ENCODE measurements at regions of chr22 and their contacts with region 1.

Region 1: DNA sequence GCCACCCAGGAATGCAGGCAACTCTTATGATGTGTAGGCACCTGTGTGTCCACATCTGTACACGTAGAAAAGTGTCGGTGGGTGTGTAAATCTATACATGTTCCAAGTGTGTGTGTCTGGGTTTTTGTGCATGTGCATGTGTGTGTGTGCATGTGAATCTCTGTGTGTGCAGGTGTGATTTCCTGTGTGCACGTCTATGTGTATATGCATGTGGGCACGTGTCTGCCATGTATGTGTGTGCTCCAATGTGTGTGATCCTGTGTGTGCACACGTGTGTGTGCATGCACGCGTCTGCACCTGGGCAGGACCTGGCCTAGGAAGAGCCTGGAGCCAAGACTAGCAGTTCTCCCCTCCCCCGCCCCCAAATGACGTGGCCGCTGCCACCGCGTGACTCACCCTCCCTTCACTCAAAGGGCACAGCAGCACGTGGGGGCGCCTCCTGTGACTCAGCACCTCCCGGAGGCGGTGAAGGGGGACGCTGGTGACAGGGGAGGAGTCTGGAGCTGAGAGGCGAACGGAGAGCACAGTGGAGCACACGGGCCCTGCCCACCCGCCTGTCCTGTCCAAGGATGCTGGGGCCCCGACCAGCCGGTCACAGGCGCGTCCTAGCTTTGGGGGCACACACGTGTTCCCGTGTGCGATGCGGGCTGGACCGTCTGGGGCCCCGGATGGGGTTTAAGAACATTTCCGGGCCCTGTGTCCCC is 10.1 kb downstream of the PIM3 start:
- DNase-seq: peak; percentile 87 to 93 (median 89)
- H3K4me3 ChIP-seq: peak overlapping the region; percentile 53
- H3K27ac ChIP-seq: peak overlapping the region in 1 of 2 donors; percentile 30
- H3K4me1 ChIP-seq: peaks cover 28% of the 10 kb centered on the region
- H3K27me3 ChIP-seq: no peaks in the 10 kb centered on the region
- CTCF ChIP-seq: no peak
- EP300 ChIP-seq: peak; percentile 51
- POLR2A ChIP-seq: peak; percentile 73

Region 2: GRCh38 chr22:49936018-49936952 is 34.4 kb before region 1 on chr22:
- intact Hi-C with region 1: loop called (anchors 5 kb)
- DNase-seq: peak; percentile 94 to 96 (median 96)
- H3K4me3 ChIP-seq: peak overlapping the region; percentile 42
- H3K27ac ChIP-seq: peak overlapping the region; percentile 58 to 95
- H3K4me1 ChIP-seq: peaks cover 15% of the 10 kb centered on the region
- H3K27me3 ChIP-seq: no peaks in the 10 kb centered on the region
- CTCF ChIP-seq: no peak
- EP300 ChIP-seq: peak; percentile 71
- POLR2A ChIP-seq: peak; percentile 39

Region 3: GRCh38 chr22:50141891-50142363 is 171.2 kb after region 1 on chr22:
- intact Hi-C with region 1: no loop called
- DNase-seq: no peak
- H3K4me3 ChIP-seq: no peak overlapping the region
- H3K27ac ChIP-seq: no peak overlapping the region
- H3K4me1 ChIP-seq: peaks cover 2% of the 10 kb centered on the region
- H3K27me3 ChIP-seq: no peaks in the 10 kb centered on the region
- CTCF ChIP-seq: no peak
- EP300 ChIP-seq: no peak
- POLR2A ChIP-seq: no peak